Heart left ventricle (tissue), 16 donors: ENCODE measurements at regions of chr5 and their contacts with region 1.

Region 1: GRCh38 chr5:69166686-69167492 is at the start of gene CCNB1:
- DNase-seq: peak; percentile 97 to 99 (median 98)
- ATAC-seq: peak; percentile 100
- H3K4me3 ChIP-seq: peak within 1 kb of the TSS; percentile 58 to 87 (median 72)
- H3K27ac ChIP-seq: peak within 1 kb of the TSS in 8 of 12 donors; percentile 3 to 71 (median 48)
- H3K4me1 ChIP-seq: peaks cover 0 to 19% (median 11%) of the 10 kb centered on the region in 12 donors
- H3K27me3 ChIP-seq: no peaks in the 10 kb centered on the region
- CTCF ChIP-seq: peak in 3 of 12 donors; percentile 7 to 12 (median 8)
- POLR2A ChIP-seq: no peak
- total RNA-seq, gene CCNB1: 1.3 to 22.9 (median 3.8) TPM

Region 2: GRCh38 chr5:69093771-69094482 is 73.0 kb before region 1 on chr5 and contains the start of gene SLC30A5:
- intact Hi-C with region 1: loop called in 1 of 10 experiments (anchors 5 kb)
- DNase-seq: peak; percentile 99 to 100 (median 99)
- ATAC-seq: peak; percentile 99 to 100 (median 100)
- H3K4me3 ChIP-seq: peak within 1 kb of the TSS; percentile 73 to 98 (median 90)
- H3K27ac ChIP-seq: peak within 1 kb of the TSS; percentile 86 to 99 (median 96)
- H3K4me1 ChIP-seq: peaks cover 0 to 29% (median 15%) of the 10 kb centered on the region in 12 donors
- H3K27me3 ChIP-seq: no peaks in the 10 kb centered on the region
- CTCF ChIP-seq: peak; percentile 85 to 98 (median 92)
- POLR2A ChIP-seq: peak; percentile 58 to 94
- total RNA-seq, gene SLC30A5: 26.9 to 44.3 (median 30.0) TPM

Region 3: GRCh38 chr5:69129413-69129812 is 37.5 kb before region 1 on chr5:
- intact Hi-C with region 1: loop called in 1 of 10 experiments (anchors 10 kb)
- DNase-seq: no peak
- ATAC-seq: no peak
- H3K4me3 ChIP-seq: no peak overlapping the region
- H3K27ac ChIP-seq: no peak overlapping the region
- H3K4me1 ChIP-seq: no peaks in the 10 kb centered on the region
- H3K27me3 ChIP-seq: no peaks in the 10 kb centered on the region
- CTCF ChIP-seq: no peak
- POLR2A ChIP-seq: no peak

Region 4: GRCh38 chr5:69217548-69218526 is 50.9 kb after region 1 on chr5:
- intact Hi-C with region 1: loop called in 3 of 10 experiments (anchors 1 to 10 kb)
- DNase-seq: peak; percentile 98 to 99 (median 98)
- ATAC-seq: peak; percentile 98 to 99 (median 98)
- H3K4me3 ChIP-seq: peak overlapping the region; percentile 58 to 100 (median 94)
- H3K27ac ChIP-seq: peak overlapping the region; percentile 93 to 99 (median 98)
- H3K4me1 ChIP-seq: peaks cover 0 to 32% (median 12%) of the 10 kb centered on the region in 12 donors
- H3K27me3 ChIP-seq: no peaks in the 10 kb centered on the region
- CTCF ChIP-seq: peak in 10 of 12 donors; percentile 8 to 47 (median 32)
- POLR2A ChIP-seq: peak; percentile 88